ENCODE measurements at regions of chr11 and their contacts with region 1.

Region 1: GRCh38 chr11:35305670-35306382 is 113.5 kb downstream of the SLC1A2 start:
- DNase-seq: peak; percentile 68
- ATAC-seq: peak; percentile 84
- H3K4me3 Mint-ChIP-seq: peak overlapping the region; percentile 44
- H3K27ac Mint-ChIP-seq: peak overlapping the region; percentile 83
- H3K4me1 Mint-ChIP-seq: peaks cover 19% of the 10 kb centered on the region
- H3K27me3 Mint-ChIP-seq: no peaks in the 10 kb centered on the region

Region 2: DNA sequence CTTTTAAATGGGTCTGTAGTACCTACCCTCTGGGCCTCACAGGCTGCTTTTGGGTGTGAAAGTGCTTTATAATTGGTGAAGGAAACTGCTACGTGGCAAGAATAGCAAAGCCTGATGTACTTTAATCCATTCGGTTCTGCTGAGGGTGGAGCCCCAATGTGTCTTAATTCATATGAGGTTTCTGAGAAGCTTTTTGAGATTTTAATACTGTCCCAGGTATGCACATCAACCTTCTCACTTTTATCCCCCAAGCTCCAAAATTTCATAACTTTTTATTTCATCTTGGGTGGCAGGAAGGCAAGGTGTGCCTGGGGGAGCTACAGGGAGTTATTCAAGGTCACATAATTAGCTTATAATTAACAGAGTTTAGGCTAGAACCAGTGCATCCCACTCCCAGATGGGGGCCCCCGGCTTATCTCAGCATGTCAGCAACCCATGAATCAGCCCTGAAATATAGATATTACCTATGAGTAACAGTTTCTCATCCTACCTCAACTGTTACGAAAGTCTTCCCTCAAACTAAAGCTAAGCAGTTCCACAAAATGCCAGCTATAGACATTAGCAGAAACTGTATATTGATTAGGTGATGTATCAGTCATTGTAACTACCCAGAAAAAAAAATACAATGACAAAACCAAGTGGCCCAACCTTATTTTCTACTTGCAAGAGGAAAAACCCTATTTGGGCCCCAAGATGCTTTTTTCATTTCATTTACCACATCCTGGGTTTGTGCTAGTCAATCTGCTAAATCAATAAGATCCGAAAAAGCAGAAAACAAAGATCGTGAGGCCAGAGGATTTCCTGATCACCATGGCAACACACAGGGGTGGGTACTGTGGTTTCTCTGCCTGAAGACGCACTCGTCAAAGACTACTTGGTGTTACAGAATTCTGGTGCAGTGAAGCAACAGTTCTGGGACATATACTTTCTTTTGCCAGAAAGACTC is 140.1 kb before region 1 on chr11:
- CTCF ChIA-PET with region 1: interaction called, 52 read pairs
- POLR2A ChIA-PET with region 1: no interaction called
- DNase-seq: peak; percentile 97
- ATAC-seq: peak; percentile 68
- H3K4me3 Mint-ChIP-seq: peak overlapping the region; percentile 68
- H3K27ac Mint-ChIP-seq: peak overlapping the region; percentile 99
- H3K4me1 Mint-ChIP-seq: peaks cover 99% of the 10 kb centered on the region
- H3K27me3 Mint-ChIP-seq: no peaks in the 10 kb centered on the region

Region 3: GRCh38 chr11:35246745-35247144 is 59.1 kb before region 1 on chr11:
- CTCF ChIA-PET with region 1: interaction called, 10 read pairs
- POLR2A ChIA-PET with region 1: no interaction called
- DNase-seq: no peak
- ATAC-seq: no peak
- H3K4me3 Mint-ChIP-seq: no peak overlapping the region
- H3K27ac Mint-ChIP-seq: peak overlapping the region; percentile 28
- H3K4me1 Mint-ChIP-seq: peaks cover 65% of the 10 kb centered on the region
- H3K27me3 Mint-ChIP-seq: no peaks in the 10 kb centered on the region

Region 4: DNA sequence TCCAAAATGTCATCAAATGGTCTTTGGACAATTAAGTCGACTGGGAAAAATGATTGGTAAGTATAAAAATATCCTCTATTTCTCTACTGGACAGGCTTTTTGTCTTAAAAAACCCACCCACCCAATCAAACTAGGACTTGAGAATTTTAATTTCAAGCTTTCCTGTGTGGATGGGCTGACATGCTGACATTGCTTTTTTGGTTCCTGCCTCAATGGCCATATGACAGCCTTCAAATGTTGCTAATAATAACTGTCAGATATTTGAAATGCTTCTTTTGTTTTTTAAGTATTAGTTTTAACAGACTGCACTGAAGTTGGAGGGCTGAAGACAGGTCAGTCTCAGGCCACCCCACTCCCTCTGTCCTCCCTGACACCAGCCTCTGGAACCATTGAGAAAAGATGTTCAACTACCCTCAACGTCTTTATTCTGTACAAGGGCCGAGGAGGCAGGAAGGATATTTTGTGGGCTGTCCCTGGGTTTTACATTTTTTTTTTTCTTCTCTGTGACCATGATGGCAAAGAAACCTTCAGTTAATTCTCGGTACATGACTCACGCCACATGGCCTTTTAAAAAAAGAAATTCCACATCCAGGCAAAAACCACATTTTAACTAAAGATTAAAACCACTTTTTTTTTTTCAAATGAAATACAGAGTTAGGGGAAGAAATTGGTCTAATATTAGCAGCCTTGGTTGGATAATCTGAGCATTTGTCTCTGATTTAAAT is 16.8 kb before region 1 on chr11:
- CTCF ChIA-PET with region 1: interaction called, 29 read pairs
- POLR2A ChIA-PET with region 1: no interaction called
- DNase-seq: peak; percentile 34
- ATAC-seq: peak; percentile 72
- H3K4me3 Mint-ChIP-seq: peak overlapping the region; percentile 15
- H3K27ac Mint-ChIP-seq: peak overlapping the region; percentile 60
- H3K4me1 Mint-ChIP-seq: peaks cover 68% of the 10 kb centered on the region
- H3K27me3 Mint-ChIP-seq: no peaks in the 10 kb centered on the region

Region 5: GRCh38 chr11:35330931-35331330 is 25.1 kb after region 1 on chr11:
- CTCF ChIA-PET with region 1: interaction called, 22 read pairs
- POLR2A ChIA-PET with region 1: no interaction called
- DNase-seq: peak; percentile 55
- ATAC-seq: peak; percentile 91
- H3K4me3 Mint-ChIP-seq: no peak overlapping the region
- H3K27ac Mint-ChIP-seq: peak overlapping the region; percentile 69
- H3K4me1 Mint-ChIP-seq: peaks cover 34% of the 10 kb centered on the region
- H3K27me3 Mint-ChIP-seq: no peaks in the 10 kb centered on the region

Region 6: GRCh38 chr11:35412285-35412684 is 106.5 kb after region 1 on chr11:
- CTCF ChIA-PET with region 1: no interaction called
- POLR2A ChIA-PET with region 1: no interaction called
- DNase-seq: no peak
- ATAC-seq: no peak
- H3K4me3 Mint-ChIP-seq: no peak overlapping the region
- H3K27ac Mint-ChIP-seq: no peak overlapping the region
- H3K4me1 Mint-ChIP-seq: no peaks in the 10 kb centered on the region
- H3K27me3 Mint-ChIP-seq: peaks cover 41% of the 10 kb centered on the region

Measured in activated CD8-positive, alpha-beta T cell treated with anti-CD3 and anti-CD28 coated beads, Interleukin-2, amount 10 ng/mL, durations not matched to agents 7 days and 5 days (primary cell).